ENCODE measurements at regions of chr4 and their contacts with region 1.

Region 1: DNA sequence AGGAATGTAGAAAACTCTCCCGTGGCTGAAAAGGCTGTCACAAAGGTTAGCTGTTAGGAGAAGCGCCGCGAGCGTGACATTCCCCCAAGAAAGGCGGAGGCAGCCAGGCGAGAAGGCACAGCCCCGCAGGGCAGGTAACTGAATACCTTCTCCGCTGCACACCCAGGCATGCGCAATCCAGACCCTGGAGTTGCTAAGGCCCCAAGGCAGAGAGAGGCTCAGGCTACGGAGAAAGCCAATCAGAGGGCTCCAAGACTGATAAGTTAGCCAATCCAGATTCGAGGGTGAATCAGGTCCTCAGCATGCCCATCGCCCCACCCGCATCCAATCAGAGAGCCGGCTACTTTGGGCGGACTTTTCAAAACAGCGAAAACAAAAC is 485 bp upstream of the CCNG2 start:
- DNase-seq: no peak
- ATAC-seq: peak; percentile 84
- H3K4me3 Mint-ChIP-seq: peak overlapping the region; percentile 99
- H3K27ac Mint-ChIP-seq: peak overlapping the region; percentile 100
- H3K4me1 Mint-ChIP-seq: peaks cover 75% of the 10 kb centered on the region
- H3K27me3 Mint-ChIP-seq: no peaks in the 10 kb centered on the region
- CTCF ChIP-seq: no peak

Region 2: DNA sequence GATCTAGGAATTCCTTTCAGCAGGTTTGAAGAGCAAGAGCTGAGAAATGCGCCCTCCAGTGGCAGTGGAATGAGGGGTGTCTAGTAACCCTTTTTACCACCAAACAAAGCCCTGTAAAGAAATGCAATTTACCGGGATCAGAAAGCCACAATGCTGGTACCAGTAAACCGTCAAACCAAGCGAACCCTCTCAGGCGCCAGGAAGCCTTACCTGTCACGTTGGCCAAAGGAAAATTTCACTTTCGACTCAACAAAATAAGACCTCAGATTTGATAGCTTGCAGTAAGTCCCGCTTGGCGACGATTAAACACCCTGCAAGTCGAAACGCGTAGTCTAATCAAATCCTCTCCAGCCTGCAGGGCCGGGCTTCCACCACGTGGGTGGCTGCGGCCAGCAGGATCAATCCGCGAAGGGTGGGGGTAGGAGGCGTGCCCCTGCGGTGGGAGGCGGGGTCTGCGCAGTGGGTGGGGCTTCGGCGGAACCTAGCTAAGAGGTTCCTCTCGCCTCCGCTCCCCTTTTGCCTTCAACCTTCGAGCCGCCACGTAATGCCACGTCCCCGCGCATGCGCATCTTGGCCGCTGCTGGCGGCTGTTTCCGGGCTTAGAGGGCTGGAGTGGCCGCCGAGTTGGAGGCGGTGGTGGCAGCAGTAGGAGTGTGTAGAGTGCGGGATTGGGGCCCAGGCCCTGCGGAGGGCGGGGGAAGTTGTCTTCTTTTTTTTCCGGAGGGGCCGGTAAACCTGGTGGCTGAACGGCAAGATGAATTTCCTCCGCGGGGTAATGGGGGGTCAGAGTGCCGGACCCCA is 1432.3 kb before region 1 on chr4 and contains the start of gene USO1:
- CTCF ChIA-PET with region 1: no interaction called
- POLR2A ChIA-PET with region 1: no interaction called
- intact Hi-C with region 1: loop called (anchors 5 kb)
- DNase-seq: peak; percentile 99
- ATAC-seq: peak; percentile 95
- H3K4me3 Mint-ChIP-seq: peak within 1 kb of the TSS; percentile 100
- H3K27ac Mint-ChIP-seq: peak within 1 kb of the TSS; percentile 99
- H3K4me1 Mint-ChIP-seq: peaks cover 52% of the 10 kb centered on the region
- H3K27me3 Mint-ChIP-seq: no peaks in the 10 kb centered on the region
- CTCF ChIP-seq: peak; percentile 23
- total RNA-seq, gene USO1: 41.3 and 41.7 TPM in 2 replicates

Region 3: GRCh38 chr4:77052352-77052751 is 104.2 kb before region 1 on chr4:
- CTCF ChIA-PET with region 1: interaction called, 3 read pairs
- POLR2A ChIA-PET with region 1: no interaction called
- intact Hi-C with region 1: loop called (anchors 1 kb)
- DNase-seq: peak; percentile 33
- ATAC-seq: peak; percentile 47
- H3K4me3 Mint-ChIP-seq: no peak overlapping the region
- H3K27ac Mint-ChIP-seq: no peak overlapping the region
- H3K4me1 Mint-ChIP-seq: no peaks in the 10 kb centered on the region
- H3K27me3 Mint-ChIP-seq: no peaks in the 10 kb centered on the region
- CTCF ChIP-seq: no peak

Region 4: DNA sequence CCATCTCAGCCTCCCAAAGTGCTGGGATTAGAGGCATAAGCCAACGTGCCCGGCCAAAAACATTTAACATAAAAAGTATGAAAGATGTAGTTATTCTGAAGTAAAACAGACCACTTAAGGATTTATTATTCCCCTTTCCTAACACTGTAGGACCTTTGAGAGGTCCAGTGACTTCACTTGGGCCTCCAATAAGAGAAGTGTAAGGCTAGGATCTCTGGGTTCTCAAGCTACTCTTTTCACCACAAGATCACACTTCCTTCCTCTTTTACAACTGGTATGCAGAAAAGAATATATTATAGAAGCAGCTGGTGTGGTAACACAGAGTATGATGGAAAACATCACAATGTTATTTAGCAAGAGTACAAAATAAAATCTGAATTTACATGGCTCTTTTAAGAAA is 29.7 kb before region 1 on chr4:
- CTCF ChIA-PET with region 1: interaction called, 6 read pairs
- POLR2A ChIA-PET with region 1: interaction called, 132 read pairs
- intact Hi-C with region 1: loop called (anchors 1 kb)
- DNase-seq: no peak
- ATAC-seq: peak; percentile 79
- H3K4me3 Mint-ChIP-seq: peak overlapping the region; percentile 59
- H3K27ac Mint-ChIP-seq: peak overlapping the region; percentile 89
- H3K4me1 Mint-ChIP-seq: peaks cover 74% of the 10 kb centered on the region
- H3K27me3 Mint-ChIP-seq: no peaks in the 10 kb centered on the region
- CTCF ChIP-seq: no peak

Region 5: DNA sequence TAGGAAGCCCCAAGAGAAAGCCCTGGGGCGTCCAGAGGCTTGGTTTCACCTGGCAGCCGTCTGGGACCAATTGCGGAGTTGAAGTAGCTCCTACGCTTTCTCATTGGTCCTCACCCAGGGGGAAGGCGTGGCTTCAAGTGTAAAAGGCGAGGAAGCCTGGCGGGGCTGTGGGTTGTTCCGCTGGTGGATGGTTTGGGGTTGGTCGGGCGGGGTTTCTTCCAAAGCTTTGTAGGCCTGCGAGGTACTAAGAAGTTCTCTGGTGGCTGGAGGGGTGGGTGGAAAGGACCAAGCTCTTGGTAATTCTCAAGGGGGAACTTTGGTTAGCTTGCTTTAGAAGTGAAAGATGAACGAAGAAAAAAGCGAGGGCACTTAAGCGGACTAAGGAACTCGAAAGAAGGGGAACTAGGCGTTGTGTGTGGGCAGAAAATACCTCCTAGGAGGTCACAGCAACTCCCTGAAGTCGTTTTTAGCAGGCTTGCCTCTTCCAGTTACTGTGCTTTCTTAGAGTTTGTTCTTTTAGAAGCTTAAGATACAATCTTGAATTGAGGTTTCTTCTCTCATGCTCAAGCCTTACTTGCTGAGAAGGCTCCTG is 37.1 kb after region 1 on chr4:
- CTCF ChIA-PET with region 1: interaction called, 8 read pairs
- POLR2A ChIA-PET with region 1: interaction called, 126 read pairs
- intact Hi-C with region 1: loop called (anchors 1 kb)
- DNase-seq: peak; percentile 73
- ATAC-seq: peak; percentile 91
- H3K4me3 Mint-ChIP-seq: peak overlapping the region; percentile 85
- H3K27ac Mint-ChIP-seq: peak overlapping the region; percentile 97
- H3K4me1 Mint-ChIP-seq: peaks cover 55% of the 10 kb centered on the region
- H3K27me3 Mint-ChIP-seq: no peaks in the 10 kb centered on the region
- CTCF ChIP-seq: no peak

Region 6: DNA sequence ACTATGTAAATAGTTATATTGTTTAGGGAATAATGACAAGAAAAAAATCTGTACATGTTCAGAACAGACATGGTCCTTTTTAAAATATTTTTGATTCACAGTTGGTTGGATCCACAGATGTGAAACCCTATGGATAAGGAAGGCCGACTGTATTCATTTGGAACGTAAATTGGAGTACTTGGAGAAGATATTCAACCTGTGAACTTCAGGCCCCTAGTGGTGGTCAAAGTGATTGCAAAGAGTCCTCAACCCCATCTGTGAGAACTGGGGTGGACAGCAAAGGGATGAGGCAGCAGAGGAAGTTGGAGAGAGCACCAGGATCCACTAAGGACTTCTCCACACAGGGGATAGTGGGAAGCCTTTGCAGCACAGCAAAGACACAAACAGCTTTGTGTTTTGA is 442.9 kb after region 1 on chr4:
- CTCF ChIA-PET with region 1: no interaction called
- POLR2A ChIA-PET with region 1: no interaction called
- intact Hi-C with region 1: no loop called
- DNase-seq: no peak
- ATAC-seq: no peak
- H3K4me3 Mint-ChIP-seq: no peak overlapping the region
- H3K27ac Mint-ChIP-seq: no peak overlapping the region
- H3K4me1 Mint-ChIP-seq: no peaks in the 10 kb centered on the region
- H3K27me3 Mint-ChIP-seq: peaks cover 4% of the 10 kb centered on the region
- CTCF ChIP-seq: peak; percentile 18

Measured in activated B cell treated with CpG ODN at 0.5 μM for 24 hours (primary cell).